Testis (tissue), 5 donors: ENCODE measurements at regions of chr7 and their contacts with region 1.

Region 1: GRCh38 chr7:102236592-102237287 is 49.9 kb upstream of the SH2B2 start:
- DNase-seq: peak; percentile 78
- H3K4me3 ChIP-seq: no peak overlapping the region
- H3K27ac ChIP-seq: no peak overlapping the region
- H3K4me1 ChIP-seq: no peaks in the 10 kb centered on the region
- H3K27me3 ChIP-seq: no peaks in the 10 kb centered on the region
- CTCF ChIP-seq: peak; percentile 29 to 81 (median 80)
- POLR2A ChIP-seq: no peak

Region 2: GRCh38 chr7:101688183-101688831 is 548.4 kb before region 1 on chr7:
- intact Hi-C with region 1: loop called (anchors 5 kb)
- DNase-seq: peak; percentile 88
- H3K4me3 ChIP-seq: peak overlapping the region; percentile 25 to 42
- H3K27ac ChIP-seq: no peak overlapping the region
- H3K4me1 ChIP-seq: peaks cover 11% of the 10 kb centered on the region
- H3K27me3 ChIP-seq: no peaks in the 10 kb centered on the region
- CTCF ChIP-seq: peak; percentile 86 to 97 (median 94)
- POLR2A ChIP-seq: no peak

Region 3: DNA sequence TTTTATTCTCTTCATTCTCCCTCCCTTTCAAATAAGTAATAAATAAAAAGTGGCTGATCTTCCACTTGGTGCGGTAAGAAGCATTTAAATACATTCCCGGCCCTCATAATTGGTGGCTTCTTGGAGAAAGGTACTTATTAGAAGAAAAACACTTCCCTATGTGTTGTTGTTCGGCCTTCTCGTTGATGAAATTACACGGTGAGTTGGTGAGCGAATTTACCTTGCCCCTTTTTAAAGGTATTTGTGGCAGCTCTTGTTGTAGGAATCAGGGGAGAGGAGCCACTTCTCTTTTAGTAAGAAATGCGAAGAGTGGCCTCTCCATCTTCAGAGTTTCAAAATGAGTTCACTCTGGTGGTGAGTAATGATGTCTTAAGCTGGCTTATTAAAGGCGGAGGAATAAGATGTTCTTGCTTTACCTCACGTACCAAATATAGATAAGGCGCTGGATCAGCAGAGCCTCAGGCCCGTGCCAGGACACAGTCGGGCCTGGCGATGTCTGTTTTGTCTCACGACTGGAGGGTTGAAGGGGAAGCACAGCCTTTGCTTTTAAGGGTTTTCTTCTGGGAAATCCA is 283.4 kb before region 1 on chr7:
- intact Hi-C with region 1: no loop called
- DNase-seq: peak; percentile 59
- H3K4me3 ChIP-seq: no peak overlapping the region
- H3K27ac ChIP-seq: peak overlapping the region; percentile 7 to 72
- H3K4me1 ChIP-seq: peaks cover 13% of the 10 kb centered on the region
- H3K27me3 ChIP-seq: no peaks in the 10 kb centered on the region
- CTCF ChIP-seq: no peak
- POLR2A ChIP-seq: no peak

Region 4: DNA sequence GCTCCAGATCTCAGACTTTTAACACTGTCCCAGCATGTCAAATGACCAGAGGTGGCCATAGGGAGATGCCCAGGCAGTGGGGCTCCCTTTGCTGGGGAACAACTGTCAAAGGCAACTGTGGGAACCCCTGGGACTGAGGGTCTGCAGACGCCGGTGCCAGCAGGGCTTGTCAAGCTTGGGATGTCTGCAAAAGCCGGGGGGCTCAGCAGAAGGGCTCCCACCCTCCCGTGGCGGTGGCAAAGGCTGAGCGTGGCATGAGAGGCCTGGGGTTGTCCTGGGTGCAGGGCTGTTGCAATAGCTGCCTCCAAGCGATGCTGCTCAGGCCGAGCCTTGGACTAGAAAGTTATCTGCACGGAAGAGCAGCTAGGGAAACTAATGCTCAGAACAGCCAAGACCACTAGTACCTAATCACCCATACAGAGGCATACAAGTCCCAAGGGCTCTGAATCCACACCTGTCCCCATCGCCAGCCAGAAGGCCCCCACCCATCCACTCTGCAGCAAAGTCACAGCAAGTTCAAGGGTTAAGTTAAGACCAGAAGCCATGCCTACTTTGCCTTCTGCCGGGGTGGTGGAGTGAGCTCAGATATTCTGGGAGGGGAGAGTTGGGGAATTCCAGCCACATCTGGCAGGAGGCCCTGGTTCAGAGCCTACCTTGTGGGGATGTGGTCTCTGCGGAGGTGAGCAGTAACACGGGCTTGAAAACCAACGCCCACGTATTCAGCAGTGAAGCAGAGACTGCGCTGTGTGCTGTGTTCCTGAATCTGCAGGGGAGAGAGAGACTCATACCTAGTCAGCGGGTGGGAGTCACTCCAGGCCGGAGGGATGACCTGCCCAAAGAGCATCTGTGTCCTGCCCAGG is 54.5 kb after region 1 on chr7:
- intact Hi-C with region 1: no loop called
- DNase-seq: no peak
- H3K4me3 ChIP-seq: no peak overlapping the region
- H3K27ac ChIP-seq: no peak overlapping the region
- H3K4me1 ChIP-seq: peaks cover 6% of the 10 kb centered on the region
- H3K27me3 ChIP-seq: no peaks in the 10 kb centered on the region
- CTCF ChIP-seq: no peak
- POLR2A ChIP-seq: no peak